CD4-positive, alpha-beta T cell (primary cell): ENCODE measurements at regions of chr9 and their contacts with region 1.

Region 1: GRCh38 chr9:69421908-69422801 is 97.1 kb downstream of the ENTREP1 start:
- DNase-seq: peak in 13 of 14 experiments; percentile 6 to 72 (median 24)
- ATAC-seq: peak; percentile 32
- H3K4me3 ChIP-seq: no peak overlapping the region
- H3K4me3 Mint-ChIP-seq: no peak overlapping the region
- H3K27ac ChIP-seq: no peak overlapping the region
- H3K27ac Mint-ChIP-seq: no peak overlapping the region
- H3K4me1 ChIP-seq: peaks cover 3% of the 10 kb centered on the region
- H3K4me1 Mint-ChIP-seq: no peaks in the 10 kb centered on the region
- H3K27me3 ChIP-seq: peaks cover 0 to 4% of the 10 kb centered on the region in 2 experiments
- H3K27me3 Mint-ChIP-seq: peaks cover 28% of the 10 kb centered on the region
- CTCF ChIP-seq: peak; percentile 76

Region 2: GRCh38 chr9:69549310-69550202 is 127.4 kb after region 1 on chr9:
- CTCF ChIA-PET with region 1: interaction called, 10 read pairs
- POLR2A ChIA-PET with region 1: no interaction called
- intact Hi-C with region 1: loop called (anchors 2 to 5 kb)
- DNase-seq: peak in 7 of 14 experiments; percentile 3 to 61 (median 9)
- ATAC-seq: peak; percentile 60
- H3K4me3 ChIP-seq: no peak overlapping the region
- H3K4me3 Mint-ChIP-seq: no peak overlapping the region
- H3K27ac ChIP-seq: no peak overlapping the region
- H3K27ac Mint-ChIP-seq: no peak overlapping the region
- H3K4me1 ChIP-seq: no peaks in the 10 kb centered on the region
- H3K4me1 Mint-ChIP-seq: no peaks in the 10 kb centered on the region
- H3K27me3 ChIP-seq: no peaks in the 10 kb centered on the region
- H3K27me3 Mint-ChIP-seq: peaks cover 22% of the 10 kb centered on the region
- CTCF ChIP-seq: peak; percentile 78

Region 3: DNA sequence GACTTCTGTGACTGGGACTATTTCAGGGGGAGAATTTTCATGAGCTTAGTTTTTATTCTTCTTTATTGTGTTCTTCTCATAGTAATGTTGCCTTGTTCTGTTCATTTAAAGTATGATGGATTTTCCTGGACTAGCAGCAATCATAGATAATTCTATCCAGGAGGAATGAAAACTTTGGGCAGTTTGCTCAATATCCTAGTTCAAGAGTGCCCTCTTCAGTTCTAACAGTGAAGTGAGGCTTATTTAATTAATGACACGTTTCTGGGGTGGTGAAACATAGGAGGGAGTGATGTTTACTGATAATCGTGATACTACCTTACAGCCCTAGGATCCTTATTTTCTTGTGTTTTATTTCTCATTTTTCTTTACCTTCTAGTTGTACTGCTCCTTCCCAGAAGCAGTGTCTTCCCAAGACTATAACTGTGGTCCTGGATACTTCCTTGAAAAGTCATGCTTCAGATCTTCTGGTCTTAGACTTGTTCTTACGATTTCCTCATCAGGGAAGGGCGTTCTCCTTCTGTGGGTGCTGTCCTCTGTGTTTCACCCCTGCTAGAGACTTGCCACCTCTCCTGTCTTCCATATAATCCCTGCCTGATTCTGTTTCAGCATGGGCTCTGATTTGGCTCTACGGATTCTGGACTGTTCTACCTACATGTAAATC is 455.8 kb after region 1 on chr9:
- CTCF ChIA-PET with region 1: no interaction called
- POLR2A ChIA-PET with region 1: no interaction called
- intact Hi-C with region 1: loop called (anchors 2 to 5 kb)
- DNase-seq: peak in 3 of 14 experiments; percentile 9 to 39 (median 27)
- ATAC-seq: no peak
- H3K4me3 ChIP-seq: no peak overlapping the region
- H3K4me3 Mint-ChIP-seq: no peak overlapping the region
- H3K27ac ChIP-seq: no peak overlapping the region
- H3K27ac Mint-ChIP-seq: no peak overlapping the region
- H3K4me1 ChIP-seq: no peaks in the 10 kb centered on the region
- H3K4me1 Mint-ChIP-seq: no peaks in the 10 kb centered on the region
- H3K27me3 ChIP-seq: no peaks in the 10 kb centered on the region
- H3K27me3 Mint-ChIP-seq: peaks cover 9% of the 10 kb centered on the region
- CTCF ChIP-seq: peak; percentile 56

Region 4: DNA sequence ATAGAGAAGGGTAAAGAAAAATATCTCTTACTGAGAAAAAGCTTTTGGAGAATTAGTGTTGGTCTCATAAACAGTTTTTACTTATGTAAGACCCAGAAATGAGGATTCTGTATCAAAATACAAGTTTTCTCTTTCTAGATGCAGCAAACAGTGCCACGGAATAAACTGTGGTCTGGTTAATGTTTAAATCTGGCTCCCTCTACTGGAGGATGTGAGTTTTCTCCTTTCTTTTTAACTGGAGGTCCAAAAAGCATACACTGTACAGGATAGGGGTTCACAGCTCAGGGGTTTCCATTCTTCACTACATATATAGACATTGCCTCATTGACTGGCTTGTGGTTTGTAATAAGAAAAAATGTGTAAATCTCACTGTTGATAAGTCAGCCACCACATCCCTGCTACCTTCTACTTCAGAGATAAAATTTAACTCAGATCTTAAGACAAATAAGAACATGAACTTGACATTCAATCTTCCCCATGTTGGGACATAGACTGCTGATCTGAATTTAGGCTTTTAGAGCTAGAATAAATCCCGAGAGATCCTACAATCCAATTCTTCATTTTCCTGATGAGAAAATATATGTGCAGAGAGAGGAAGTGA is 497.4 kb after region 1 on chr9:
- CTCF ChIA-PET with region 1: no interaction called
- POLR2A ChIA-PET with region 1: no interaction called
- intact Hi-C with region 1: loop called (anchors 2 kb)
- DNase-seq: peak in 3 of 14 experiments; percentile 50 to 56 (median 51)
- ATAC-seq: peak; percentile 57
- H3K4me3 ChIP-seq: no peak overlapping the region
- H3K4me3 Mint-ChIP-seq: no peak overlapping the region
- H3K27ac ChIP-seq: no peak overlapping the region
- H3K27ac Mint-ChIP-seq: no peak overlapping the region
- H3K4me1 ChIP-seq: no peaks in the 10 kb centered on the region
- H3K4me1 Mint-ChIP-seq: no peaks in the 10 kb centered on the region
- H3K27me3 ChIP-seq: no peaks in the 10 kb centered on the region
- H3K27me3 Mint-ChIP-seq: peaks cover 6% of the 10 kb centered on the region
- CTCF ChIP-seq: peak; percentile 79

Region 5: GRCh38 chr9:70111042-70111602 is 689.0 kb after region 1 on chr9:
- CTCF ChIA-PET with region 1: interaction called, 3 read pairs
- POLR2A ChIA-PET with region 1: no interaction called
- intact Hi-C with region 1: loop called in 1 of 2 experiments (anchors 2 kb)
- DNase-seq: peak; percentile 7 to 67 (median 30)
- ATAC-seq: no peak
- H3K4me3 ChIP-seq: no peak overlapping the region
- H3K4me3 Mint-ChIP-seq: no peak overlapping the region
- H3K27ac ChIP-seq: no peak overlapping the region
- H3K27ac Mint-ChIP-seq: no peak overlapping the region
- H3K4me1 ChIP-seq: peaks cover 3% of the 10 kb centered on the region
- H3K4me1 Mint-ChIP-seq: peaks cover 14% of the 10 kb centered on the region
- H3K27me3 ChIP-seq: peaks cover 0 to under 1% of the 10 kb centered on the region in 2 experiments
- H3K27me3 Mint-ChIP-seq: peaks cover 30% of the 10 kb centered on the region
- CTCF ChIP-seq: peak; percentile 77